ENCODE measurements at regions of chr19 and their contacts with region 1.

Region 1: GRCh38 chr19:54203151-54203611 is 2.5 kb downstream of the RPS9 start:
- DNase-seq: no peak
- ATAC-seq: no peak
- H3K4me3 ChIP-seq: 0 out of 4 replicates have a peak overlapping the region, but pooled peaks of 1 of the 2 experiments have one; percentile 8
- H3K27ac ChIP-seq: no peak overlapping the region
- H3K4me1 ChIP-seq: peaks cover 9 to 51% of the 10 kb centered on the region in 2 experiments
- H3K27me3 ChIP-seq: no peaks in the 10 kb centered on the region
- CTCF ChIP-seq: no peak
- POLR2A ChIP-seq: no peak
- RAD21 ChIP-seq: no peak

Region 2: DNA sequence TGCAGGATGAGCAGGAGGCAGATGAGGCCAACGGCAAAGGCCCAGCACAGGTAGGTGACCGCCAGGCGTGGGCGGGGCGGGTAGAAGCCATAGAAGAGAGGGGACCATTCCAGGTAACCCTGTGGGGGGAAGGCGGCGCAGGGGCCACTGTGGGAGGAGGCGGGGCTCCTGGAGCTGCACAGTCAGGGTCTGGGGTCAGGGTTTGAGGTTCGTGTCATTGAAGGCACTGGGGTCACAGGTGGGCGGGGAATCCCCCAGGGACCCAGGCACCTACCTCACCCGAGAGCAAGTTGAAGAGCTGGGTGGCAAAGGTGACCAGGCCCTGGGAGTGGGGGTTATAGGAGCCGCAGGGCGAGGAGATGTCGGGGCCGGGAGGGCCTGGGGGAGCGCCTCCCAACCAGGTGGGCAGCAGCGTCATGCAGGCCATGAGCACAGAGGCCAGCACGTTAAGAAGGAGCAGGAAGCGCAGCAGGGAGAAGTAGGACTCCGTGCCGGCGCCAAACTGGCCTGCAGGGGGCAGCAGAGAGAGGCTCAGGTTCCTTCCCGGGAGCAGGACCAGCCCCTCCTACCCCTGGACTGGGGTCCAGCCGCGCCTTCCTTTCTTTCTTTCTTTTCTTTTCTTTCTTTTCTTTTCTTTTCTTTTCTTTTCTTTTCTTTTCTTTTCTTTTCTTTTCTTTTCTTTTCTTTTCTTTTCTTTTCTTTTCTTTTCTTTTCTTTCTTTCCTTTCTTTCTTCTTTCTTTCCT is 34.8 kb before region 1 on chr19:
- CTCF ChIA-PET with region 1: no interaction called
- POLR2A ChIA-PET with region 1: interaction called, 14 read pairs
- RAD21 ChIA-PET with region 1: no interaction called
- intact Hi-C with region 1: no loop called
- DNase-seq: peak; percentile 69
- ATAC-seq: peak; percentile 65
- H3K4me3 ChIP-seq: no peak overlapping the region
- H3K27ac ChIP-seq: no peak overlapping the region; the same call in 1 of the 2 replicates
- H3K4me1 ChIP-seq: peaks cover 6 to 32% of the 10 kb centered on the region in 2 experiments; a peak in 3 of 4 replicates
- H3K27me3 ChIP-seq: no peaks in the 10 kb centered on the region
- CTCF ChIP-seq: peak in 2 of 3 experiments; percentile 66 to 91; a peak in 5 of 6 replicates
- POLR2A ChIP-seq: no peak
- RAD21 ChIP-seq: no peak; the same call in 1 of the 2 replicates

Region 3: DNA sequence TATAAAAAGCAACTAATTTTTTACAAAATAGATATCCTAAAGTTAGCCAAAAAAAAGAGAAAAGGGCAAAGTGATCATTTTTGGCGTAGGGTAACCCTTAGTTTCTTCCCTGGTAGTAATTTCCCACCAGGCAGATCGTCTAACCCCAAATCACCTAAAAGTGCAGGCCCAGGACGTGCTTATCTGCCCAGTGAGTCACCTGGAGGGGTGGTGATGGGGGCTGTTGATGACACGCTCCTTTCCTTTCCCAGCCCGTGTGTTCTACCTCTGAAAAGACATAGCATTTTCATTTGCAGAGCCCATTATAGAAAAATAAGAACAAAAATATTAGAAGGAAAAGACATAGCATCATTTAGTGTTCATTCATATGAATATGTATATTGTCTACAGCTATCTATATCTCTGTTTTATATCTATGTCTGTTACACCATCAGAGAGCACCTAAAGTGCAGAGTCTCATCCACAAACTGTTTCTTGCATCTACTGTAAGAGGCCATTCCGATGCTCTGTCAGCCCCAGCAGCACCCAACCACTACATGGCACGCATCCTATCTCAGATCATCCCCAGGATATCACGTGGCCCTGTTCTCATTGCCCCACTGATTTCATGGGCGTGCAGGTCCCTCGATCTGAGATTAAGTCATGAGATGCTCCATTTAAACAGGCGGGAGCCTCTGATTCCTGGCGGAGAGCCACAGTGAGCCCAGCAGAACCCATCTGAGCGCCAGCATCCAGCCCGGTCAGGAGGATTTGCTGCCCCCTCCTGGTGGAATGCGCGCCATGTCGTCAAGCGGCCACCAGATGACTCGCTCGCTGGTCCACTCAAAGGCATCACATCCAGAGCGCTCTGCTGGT is 28.1 kb after region 1 on chr19:
- CTCF ChIA-PET with region 1: no interaction called
- POLR2A ChIA-PET with region 1: interaction called, 10 read pairs
- RAD21 ChIA-PET with region 1: no interaction called
- intact Hi-C with region 1: no loop called
- DNase-seq: peak; percentile 81
- ATAC-seq: peak; percentile 97
- H3K4me3 ChIP-seq: no peak overlapping the region
- H3K27ac ChIP-seq: no peak overlapping the region
- H3K4me1 ChIP-seq: peaks cover 5 to 15% of the 10 kb centered on the region in 2 experiments; a peak in 3 of 4 replicates
- H3K27me3 ChIP-seq: no peaks in the 10 kb centered on the region
- CTCF ChIP-seq: peak; percentile 98 to 100 (median 100)
- POLR2A ChIP-seq: no peak
- RAD21 ChIP-seq: peak; percentile 87

Measured in HCT116 (cell line).